Upper lobe of right lung (tissue), 1 donor: ENCODE measurements at regions of chr19 and their contacts with region 1.

Region 1: GRCh38 chr19:2610637-2611482 is 91.6 kb downstream of the GNG7 start:
- DNase-seq: peak; percentile 97
- ATAC-seq: peak; percentile 97
- H3K4me3 ChIP-seq: peak overlapping the region; percentile 54
- H3K27ac ChIP-seq: peak overlapping the region; percentile 89
- H3K4me1 ChIP-seq: peaks cover 20% of the 10 kb centered on the region
- H3K27me3 ChIP-seq: no peaks in the 10 kb centered on the region
- CTCF ChIP-seq: peak; percentile 97

Region 2: GRCh38 chr19:2475702-2476450 is 135.0 kb before region 1 on chr19 and contains the start of gene GADD45B:
- intact Hi-C with region 1: loop called (anchors 10 kb)
- DNase-seq: peak; percentile 99
- ATAC-seq: peak; percentile 86
- H3K4me3 ChIP-seq: peak within 1 kb of the TSS; percentile 93
- H3K27ac ChIP-seq: peak within 1 kb of the TSS; percentile 91
- H3K4me1 ChIP-seq: peaks cover 24% of the 10 kb centered on the region
- H3K27me3 ChIP-seq: no peaks in the 10 kb centered on the region
- CTCF ChIP-seq: no peak
- total RNA-seq, gene GADD45B: 91.2 TPM